ENCODE measurements at regions of chr4 and their contacts with region 1.

Region 1: DNA sequence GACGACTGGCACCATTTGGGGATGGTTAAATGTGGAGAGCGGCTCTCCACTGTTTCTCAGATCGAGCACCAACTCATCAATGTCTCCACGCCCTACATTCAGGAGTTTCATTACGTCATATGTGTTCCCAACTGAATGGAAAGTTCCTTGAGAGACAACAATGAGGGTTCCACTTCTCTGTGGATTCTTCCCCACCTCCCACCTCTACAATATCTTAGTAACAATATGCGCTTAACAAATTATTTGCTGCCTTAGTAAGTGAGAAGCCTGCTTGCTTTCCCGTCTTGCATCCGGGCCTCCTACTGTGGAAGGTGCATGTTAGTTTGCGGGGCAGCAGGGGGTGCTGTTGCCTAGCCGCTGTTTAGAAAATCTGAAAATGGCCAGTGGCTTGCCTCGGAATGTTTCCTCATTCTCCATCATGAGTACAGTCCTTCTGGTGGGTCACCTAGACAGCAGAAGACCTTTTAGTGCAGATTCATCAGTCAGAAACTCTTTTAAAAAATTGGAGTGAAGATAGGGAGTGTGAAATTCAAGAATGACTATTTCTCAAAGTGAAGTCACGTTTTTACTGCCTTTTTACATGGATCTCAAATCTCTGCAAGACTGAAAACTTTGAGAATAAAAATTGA is 55.7 kb downstream of the PHOX2B start:
- DNase-seq: no peak
- H3K4me3 ChIP-seq: no peak overlapping the region
- H3K27ac ChIP-seq: no peak overlapping the region
- H3K4me1 ChIP-seq: no peaks in the 10 kb centered on the region
- H3K27me3 ChIP-seq: no peaks in the 10 kb centered on the region
- CTCF ChIP-seq: peak; percentile 39 to 45 (median 43)
- POLR2A ChIP-seq: no peak

Region 2: DNA sequence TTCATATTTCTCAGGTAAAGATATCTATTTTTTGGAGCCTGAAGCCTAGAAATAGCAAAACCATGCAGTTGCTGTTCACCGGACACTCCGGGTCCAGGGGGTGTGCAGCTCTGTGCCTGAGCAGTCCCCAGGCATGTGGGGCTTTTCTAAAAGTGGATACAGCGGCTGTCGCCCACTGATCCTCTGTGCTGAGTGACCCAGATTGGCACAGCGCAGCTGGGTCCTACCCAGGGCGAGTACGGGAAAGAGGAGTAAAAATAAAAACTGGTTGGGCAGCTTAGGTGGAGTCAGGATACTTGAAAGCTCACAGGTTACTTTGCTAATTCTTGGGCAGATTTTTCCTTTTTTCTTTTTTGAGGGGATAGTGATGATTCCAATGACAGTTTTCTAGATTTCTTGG is 317.3 kb before region 1 on chr4:
- intact Hi-C with region 1: no loop called
- DNase-seq: no peak
- H3K4me3 ChIP-seq: no peak overlapping the region
- H3K27ac ChIP-seq: no peak overlapping the region
- H3K4me1 ChIP-seq: no peaks in the 10 kb centered on the region
- H3K27me3 ChIP-seq: no peaks in the 10 kb centered on the region
- CTCF ChIP-seq: no peak
- POLR2A ChIP-seq: no peak

Region 3: DNA sequence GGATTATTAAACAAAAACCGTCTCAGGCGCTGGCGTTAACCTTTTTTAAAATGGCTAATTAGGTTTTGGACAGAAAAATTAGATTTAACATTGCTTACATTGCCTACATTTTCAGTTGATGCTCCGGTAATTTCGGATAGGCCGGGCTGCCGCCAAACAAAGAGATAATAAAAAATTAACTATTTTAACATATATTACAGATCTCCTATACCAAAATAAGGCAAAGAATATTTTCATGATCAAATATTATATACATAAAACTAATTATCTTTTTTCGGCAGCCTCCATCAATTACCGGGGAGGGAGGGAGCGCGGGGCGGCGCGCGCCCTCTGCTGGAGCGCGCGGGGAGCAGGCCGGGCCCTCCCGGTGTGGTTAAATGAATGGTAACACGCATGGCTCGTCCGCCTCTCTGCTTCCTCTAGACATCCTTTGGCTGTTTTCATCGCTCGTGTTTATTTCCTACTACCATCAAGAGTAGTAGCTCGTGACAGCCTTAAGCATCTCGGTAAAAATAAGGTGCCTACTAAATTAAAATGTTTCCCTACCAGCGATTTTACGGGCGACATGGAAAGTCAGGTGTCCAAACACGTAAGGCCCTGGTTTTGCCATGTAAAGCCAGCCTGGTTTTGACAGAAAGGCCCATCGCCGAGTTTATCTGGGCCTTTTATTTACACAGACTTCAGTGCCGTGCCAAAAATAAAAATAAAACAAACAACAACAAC is 190.0 kb after region 1 on chr4:
- intact Hi-C with region 1: loop called (anchors 10 kb)
- DNase-seq: no peak
- H3K4me3 ChIP-seq: peak overlapping the region; percentile 17 to 46
- H3K27ac ChIP-seq: no peak overlapping the region
- H3K4me1 ChIP-seq: peaks cover 27% of the 10 kb centered on the region
- H3K27me3 ChIP-seq: peaks cover 15% of the 10 kb centered on the region
- CTCF ChIP-seq: peak in 2 of 3 experiments; percentile 55 to 71
- POLR2A ChIP-seq: no peak

Measured in vagina (tissue), 2 donors.